ENCODE measurements at regions of chr1 and their contacts with region 1.

Region 1: GRCh38 chr1:222713091-222713961 is 962 bp downstream of the BROX start:
- DNase-seq: peak; percentile 97
- ATAC-seq: peak; percentile 95
- H3K4me3 ChIP-seq: peak overlapping the region; percentile 95
- H3K27ac ChIP-seq: peak overlapping the region; percentile 49 to 97
- H3K4me1 ChIP-seq: no peaks in the 10 kb centered on the region
- H3K27me3 ChIP-seq: no peaks in the 10 kb centered on the region

Region 2: DNA sequence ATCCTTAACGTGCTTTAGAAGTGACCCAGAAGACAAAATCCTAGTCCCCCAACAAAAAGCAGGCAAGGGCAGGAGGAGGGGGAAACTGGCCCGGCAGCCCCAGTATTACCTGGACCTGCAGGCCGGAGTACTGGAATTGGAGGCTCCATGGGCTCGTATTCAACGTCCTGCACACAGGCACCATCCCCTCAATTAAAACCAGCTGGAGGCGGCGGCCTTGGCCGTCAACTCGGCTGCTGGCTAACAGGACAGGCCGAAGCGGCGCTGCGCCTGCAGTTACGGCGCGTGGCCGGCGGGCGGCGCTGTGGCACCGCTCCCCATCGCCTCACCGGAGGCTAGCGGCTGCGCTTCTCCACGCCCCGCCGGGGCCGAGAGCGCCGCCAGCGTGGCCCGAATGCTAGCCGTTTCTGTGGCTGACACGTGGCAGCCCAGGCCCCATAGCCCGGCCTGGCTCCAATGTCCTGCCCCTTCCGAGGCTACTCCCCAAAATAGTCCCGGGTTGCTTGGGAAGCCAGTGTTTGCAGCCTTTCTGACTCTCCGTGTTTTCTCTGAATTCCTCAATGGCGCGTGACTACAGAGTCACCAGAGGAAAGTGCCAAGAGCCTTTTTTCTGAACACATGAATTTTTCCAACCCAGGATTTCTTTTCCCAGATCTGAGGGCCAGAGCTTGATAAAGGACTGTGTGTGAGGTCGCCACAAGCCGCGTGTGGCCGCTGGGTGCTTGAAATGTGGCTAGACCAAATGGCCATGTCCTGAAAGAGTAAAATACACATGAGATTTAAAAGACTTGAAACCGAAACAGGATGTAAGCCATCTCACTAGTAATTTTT is 247.9 kb before region 1 on chr1:
- intact Hi-C with region 1: loop called in 1 of 2 experiments (anchors 10 kb)
- DNase-seq: peak; percentile 97
- ATAC-seq: peak; percentile 100
- H3K4me3 ChIP-seq: peak overlapping the region in 1 of 2 donors; percentile 29
- H3K27ac ChIP-seq: peak overlapping the region in 1 of 2 donors; percentile 64
- H3K4me1 ChIP-seq: no peaks in the 10 kb centered on the region
- H3K27me3 ChIP-seq: no peaks in the 10 kb centered on the region

Region 3: DNA sequence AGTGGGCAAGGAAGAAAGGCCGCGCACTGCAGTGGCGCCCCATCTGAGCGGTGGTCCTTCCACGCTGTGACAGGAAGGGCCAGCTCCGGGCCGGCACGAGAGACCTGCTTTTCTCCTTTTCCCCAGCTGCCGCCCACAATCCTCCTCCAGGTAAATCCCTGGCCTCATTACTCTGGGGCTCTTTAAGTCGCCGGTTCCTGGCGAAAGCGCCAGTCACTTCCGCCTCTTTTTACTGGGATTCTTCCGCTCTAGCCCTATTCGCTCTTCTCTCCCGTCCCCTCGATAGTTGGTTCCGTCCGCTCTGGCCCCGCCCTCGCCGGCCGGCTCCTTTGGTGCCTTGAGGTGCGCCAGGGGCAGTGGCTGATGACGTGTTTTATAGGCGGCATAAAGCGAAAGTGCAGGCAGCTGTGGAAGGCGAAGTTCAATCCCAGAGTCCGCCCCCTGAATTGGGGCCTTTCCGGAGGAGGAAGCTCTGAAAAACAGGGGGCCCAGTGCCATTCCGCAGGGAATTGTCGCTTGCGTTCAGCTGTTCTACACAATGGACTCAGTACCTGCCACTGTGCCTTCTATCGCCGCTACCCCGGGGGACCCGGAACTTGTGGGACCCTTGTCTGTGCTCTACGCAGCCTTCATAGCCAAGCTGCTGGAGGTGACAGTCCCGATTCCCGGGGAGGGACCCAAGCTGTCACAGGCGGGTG is 69.2 kb before region 1 on chr1:
- intact Hi-C with region 1: loop called (anchors 10 kb)
- DNase-seq: peak; percentile 99
- ATAC-seq: peak; percentile 99
- H3K4me3 ChIP-seq: peak overlapping the region; percentile 85 to 95
- H3K27ac ChIP-seq: peak overlapping the region; percentile 77 to 93
- H3K4me1 ChIP-seq: no peaks in the 10 kb centered on the region
- H3K27me3 ChIP-seq: no peaks in the 10 kb centered on the region

Region 4: GRCh38 chr1:222829868-222830267 is 116.5 kb after region 1 on chr1:
- intact Hi-C with region 1: no loop called
- DNase-seq: no peak
- ATAC-seq: no peak
- H3K4me3 ChIP-seq: no peak overlapping the region
- H3K27ac ChIP-seq: no peak overlapping the region
- H3K4me1 ChIP-seq: peaks cover 0 to 4% of the 10 kb centered on the region in 2 donors
- H3K27me3 ChIP-seq: no peaks in the 10 kb centered on the region

Measured in aorta (tissue), 5 donors.